Activated T-helper 2 cell treated with anti-CD3 and anti-CD28 coated beads, Interferon-gamma antibody, Interleukin-2, Interleukin-4, amounts not matched to agents 10 μg/mL and 5 μg/mL and 100 μg/mL, durations not matched to agents 14 hours and 24 hours and 36 hours (primary cell): ENCODE measurements at regions of chr1 and their contacts with region 1.

Region 1: DNA sequence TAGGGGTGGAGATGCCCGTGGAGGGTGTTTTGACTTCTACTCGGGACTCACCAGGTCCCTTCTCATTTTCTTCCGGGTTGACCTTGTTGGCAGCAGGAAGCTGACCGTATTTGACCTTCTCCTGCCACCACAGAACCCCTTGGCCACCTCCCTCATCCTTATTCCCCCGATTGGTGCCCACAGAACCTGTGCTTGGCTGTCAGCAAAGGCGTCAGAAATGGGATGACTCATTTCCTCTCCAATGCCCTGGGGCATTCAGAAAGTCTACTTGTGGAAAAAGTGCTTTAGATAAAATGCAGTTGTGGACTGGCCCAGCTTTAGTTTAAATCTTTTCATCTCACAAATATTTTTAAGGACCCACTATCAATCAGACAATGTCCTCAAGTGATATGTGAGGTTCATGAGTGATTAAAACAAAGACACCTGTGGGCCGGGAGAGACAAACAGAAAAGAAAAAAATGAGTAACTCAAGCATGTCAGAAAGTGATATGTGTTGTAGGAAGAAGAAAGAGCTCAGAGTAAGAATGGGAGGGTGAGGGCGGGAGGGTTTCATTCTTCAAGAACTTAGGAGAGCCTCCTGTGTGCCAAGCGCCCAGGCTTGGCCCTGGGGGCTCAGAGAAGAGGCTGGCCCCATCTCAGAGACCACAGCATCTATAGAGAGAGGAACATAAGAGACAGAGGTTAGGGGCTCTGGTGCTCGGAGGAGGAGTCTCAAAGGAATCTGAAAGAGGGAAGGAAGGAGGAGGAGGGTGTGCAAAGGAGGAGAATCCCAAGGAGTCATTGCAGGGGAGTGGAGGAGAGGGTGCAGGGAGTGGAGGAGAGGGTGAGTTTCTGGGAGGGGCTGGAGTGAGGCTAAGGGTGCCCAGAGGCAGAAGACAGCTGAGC is 221.6 kb upstream of the VAMP3 start:
- DNase-seq: peak; percentile 47
- H3K4me3 Mint-ChIP-seq: peak overlapping the region; percentile 68
- H3K27ac Mint-ChIP-seq: peak overlapping the region; percentile 96
- H3K4me1 Mint-ChIP-seq: peaks cover 31% of the 10 kb centered on the region
- H3K27me3 Mint-ChIP-seq: peaks cover 5% of the 10 kb centered on the region

Region 2: GRCh38 chr1:7526867-7527732 is 22.4 kb before region 1 on chr1:
- intact Hi-C with region 1: loop called (anchors 1 kb)
- DNase-seq: peak; percentile 15
- H3K4me3 Mint-ChIP-seq: no peak overlapping the region
- H3K27ac Mint-ChIP-seq: peak overlapping the region; percentile 86
- H3K4me1 Mint-ChIP-seq: peaks cover 18% of the 10 kb centered on the region
- H3K27me3 Mint-ChIP-seq: peaks cover 2% of the 10 kb centered on the region